Body of pancreas (tissue), 4 donors: ENCODE measurements at regions of chr11 and their contacts with region 1.

Region 1: DNA sequence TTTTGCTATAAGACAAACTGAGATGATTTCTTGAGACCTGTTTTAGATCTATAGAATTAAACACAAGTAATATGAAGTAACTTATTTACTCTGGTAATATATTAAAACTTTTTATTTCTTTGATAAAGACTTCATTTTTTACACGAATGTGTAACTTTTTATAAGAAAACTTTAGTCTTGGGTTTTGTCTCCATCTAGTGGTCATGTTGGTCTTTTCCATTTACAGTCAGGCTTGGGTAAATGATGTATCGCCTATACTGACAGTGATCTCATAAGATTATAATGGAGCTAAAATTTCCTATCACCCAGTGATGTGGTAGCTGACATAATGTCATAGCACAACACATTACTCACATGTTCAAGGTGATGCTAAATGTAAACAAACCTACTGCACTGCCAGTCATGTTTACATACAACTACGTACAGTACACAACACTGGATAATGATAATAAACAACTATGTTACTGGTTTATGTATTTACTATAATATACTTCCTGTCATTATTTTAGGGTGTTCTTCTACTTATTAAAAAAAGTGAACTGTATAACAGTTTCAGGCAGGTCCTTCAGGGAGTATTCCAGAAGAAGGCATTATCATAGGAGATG is 7.5 kb upstream of the C11orf97 start:
- DNase-seq: no peak
- ATAC-seq: no peak
- H3K4me3 ChIP-seq: no peak overlapping the region
- H3K27ac ChIP-seq: no peak overlapping the region
- H3K4me1 ChIP-seq: no peaks in the 10 kb centered on the region
- H3K27me3 ChIP-seq: no peaks in the 10 kb centered on the region
- CTCF ChIP-seq: peak; percentile 23 to 79 (median 61)
- POLR2A ChIP-seq: no peak

Region 2: DNA sequence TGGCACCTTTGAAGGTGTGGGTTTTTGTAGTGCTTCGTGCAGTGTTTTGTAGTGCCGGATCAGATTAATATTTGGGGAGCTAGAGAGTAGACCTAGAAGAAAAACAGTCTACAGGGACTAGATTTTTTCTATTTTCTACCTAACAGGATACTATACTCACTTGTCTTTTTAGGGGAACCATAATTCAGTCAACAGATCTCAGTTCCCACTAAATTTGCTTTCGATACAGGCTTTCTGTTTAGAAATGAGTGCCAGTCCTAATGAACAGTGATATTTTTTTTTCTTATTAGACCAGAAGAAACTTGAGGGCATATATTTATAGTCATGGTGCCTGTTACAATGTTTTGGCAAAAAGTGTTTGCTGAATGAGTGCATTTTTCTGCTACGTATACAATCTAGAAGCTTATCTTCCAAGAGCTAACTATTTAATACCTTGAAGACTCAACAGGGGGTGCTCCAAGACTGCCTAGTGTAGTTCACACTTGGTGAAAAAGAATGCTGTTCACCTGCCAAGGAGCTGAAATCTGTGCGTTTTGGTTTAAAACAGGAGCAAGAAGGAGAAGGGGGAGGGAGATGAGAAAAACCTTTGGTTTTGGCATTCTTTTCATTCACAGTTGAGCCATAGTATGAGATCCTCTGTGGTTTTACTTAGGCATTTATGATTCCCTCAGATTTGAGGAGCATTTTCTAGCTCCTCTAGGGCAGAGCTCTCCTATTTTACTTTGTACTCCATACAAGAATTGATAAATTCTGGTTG is 609.5 kb before region 1 on chr11:
- intact Hi-C with region 1: loop called (anchors 10 kb)
- DNase-seq: peak; percentile 18 to 36 (median 26)
- ATAC-seq: peak; percentile 91
- H3K4me3 ChIP-seq: no peak overlapping the region
- H3K27ac ChIP-seq: no peak overlapping the region
- H3K4me1 ChIP-seq: no peaks in the 10 kb centered on the region
- H3K27me3 ChIP-seq: no peaks in the 10 kb centered on the region
- CTCF ChIP-seq: peak; percentile 46 to 87 (median 84)
- POLR2A ChIP-seq: no peak